AG04450 (cell line): ENCODE measurements at regions of chr7 and their contacts with region 1.

Region 1: DNA sequence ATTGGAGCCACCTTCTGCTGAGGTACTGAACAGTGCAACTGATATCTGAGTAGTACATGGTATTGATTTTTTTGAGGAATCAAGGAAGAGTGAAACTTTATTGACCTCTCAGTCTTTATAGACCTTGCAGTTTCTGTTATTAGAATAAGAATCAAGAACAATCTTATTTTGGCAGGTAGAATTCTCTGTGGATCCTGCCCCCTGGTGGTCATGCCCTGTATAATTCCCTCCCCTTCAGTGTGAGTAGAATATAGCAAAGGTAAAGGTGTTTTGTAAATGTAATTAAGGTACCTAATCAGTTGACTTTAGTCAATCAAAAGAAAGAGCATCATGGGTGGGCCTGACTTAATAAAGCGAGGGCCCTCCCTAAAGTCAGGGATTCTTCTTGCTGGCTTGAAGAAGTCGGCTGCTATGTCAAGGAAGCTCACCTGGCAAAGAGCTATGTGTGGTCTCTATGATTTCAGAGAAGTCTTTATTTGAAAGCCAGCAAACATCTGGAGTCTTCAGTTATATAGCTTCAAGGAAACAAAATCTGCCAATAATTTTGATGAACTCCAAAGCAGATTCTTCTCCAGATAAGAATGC is 142.8 kb downstream of the LSM5 start:
- DNase-seq: no peak
- H3K4me3 ChIP-seq: no peak overlapping the region
- H3K27ac ChIP-seq: no peak overlapping the region
- H3K27me3 ChIP-seq: no peaks in the 10 kb centered on the region
- CTCF ChIP-seq: peak; percentile 45

Region 2: DNA sequence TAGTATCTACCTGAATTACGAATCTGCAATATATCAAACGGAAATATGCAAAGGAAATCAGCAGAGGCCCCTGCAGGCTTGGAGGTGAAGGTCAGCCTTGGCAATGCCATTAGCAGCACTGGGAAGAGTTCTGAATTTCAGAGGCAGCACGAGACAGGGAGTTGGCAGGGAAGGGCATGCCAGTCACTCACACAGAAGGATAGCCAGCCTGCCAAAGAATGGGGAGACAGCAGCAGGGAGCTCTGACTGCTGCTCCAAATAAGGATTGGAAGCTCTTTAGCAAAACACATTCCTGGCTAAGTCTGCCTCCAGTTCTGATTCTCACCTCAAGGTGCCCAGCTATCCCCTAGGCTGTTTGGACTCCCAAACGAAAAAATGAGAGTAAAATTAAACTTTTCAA is 465.1 kb before region 1 on chr7:
- CTCF ChIA-PET with region 1: no interaction called
- POLR2A ChIA-PET with region 1: no interaction called
- DNase-seq: no peak
- H3K4me3 ChIP-seq: no peak overlapping the region
- H3K27ac ChIP-seq: no peak overlapping the region
- H3K27me3 ChIP-seq: no peaks in the 10 kb centered on the region
- CTCF ChIP-seq: no peak

Region 3: DNA sequence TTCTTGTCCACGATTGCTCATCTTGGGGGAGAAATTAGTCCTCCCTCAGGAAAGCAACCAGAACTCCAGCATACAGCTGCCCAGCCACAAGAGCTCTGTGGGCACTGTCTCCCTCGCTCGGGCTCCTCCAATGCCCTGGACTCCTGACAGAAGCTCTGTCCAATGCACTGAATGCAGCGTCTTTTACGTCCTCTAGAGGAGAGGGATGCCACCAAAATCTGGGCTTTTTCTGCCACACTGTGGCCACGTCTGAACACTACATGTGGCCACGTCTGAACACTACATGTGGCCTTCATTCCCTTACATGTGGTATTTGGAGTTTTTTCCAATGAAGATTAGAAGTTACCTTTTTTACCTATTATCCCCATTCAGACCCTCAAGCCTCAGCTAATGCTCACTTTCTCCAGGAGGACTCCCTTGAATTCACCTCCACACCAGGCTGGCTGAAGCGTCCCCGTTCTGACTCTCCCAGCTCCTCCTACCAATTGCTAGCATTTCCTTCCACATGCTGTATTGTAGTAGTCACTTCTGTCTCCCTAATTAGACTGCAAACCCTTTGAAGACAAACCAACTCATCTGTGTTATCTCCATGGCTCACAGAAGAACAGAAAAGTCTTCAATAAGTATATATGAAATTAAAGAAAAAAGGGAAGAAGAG is 142.8 kb before region 1 on chr7:
- CTCF ChIA-PET with region 1: interaction called, 19 read pairs
- POLR2A ChIA-PET with region 1: no interaction called
- DNase-seq: peak; percentile 41
- H3K4me3 ChIP-seq: no peak overlapping the region
- H3K27ac ChIP-seq: no peak overlapping the region
- H3K27me3 ChIP-seq: no peaks in the 10 kb centered on the region
- CTCF ChIP-seq: peak; percentile 64